Panc1 (cell line): ENCODE measurements at regions of chr9 and their contacts with region 1.

Region 1: GRCh38 chr9:105510024-105510423 is 47.9 kb upstream of the FKTN start:
- DNase-seq: no peak
- ATAC-seq: no peak
- H3K4me3 ChIP-seq: no peak overlapping the region
- H3K27ac ChIP-seq: no peak overlapping the region
- H3K4me1 ChIP-seq: no peaks in the 10 kb centered on the region
- H3K27me3 ChIP-seq: no peaks in the 10 kb centered on the region
- CTCF ChIP-seq: no peak

Region 2: GRCh38 chr9:105457560-105458294 is 52.3 kb before region 1 on chr9:
- CTCF ChIA-PET with region 1: no interaction called
- POLR2A ChIA-PET with region 1: no interaction called
- in situ Hi-C with region 1: no loop called
- intact Hi-C with region 1: no loop called
- DNase-seq: no peak
- ATAC-seq: no peak
- H3K4me3 ChIP-seq: no peak overlapping the region
- H3K27ac ChIP-seq: no peak overlapping the region
- H3K4me1 ChIP-seq: no peaks in the 10 kb centered on the region
- H3K27me3 ChIP-seq: no peaks in the 10 kb centered on the region
- CTCF ChIP-seq: no peak

Region 3: DNA sequence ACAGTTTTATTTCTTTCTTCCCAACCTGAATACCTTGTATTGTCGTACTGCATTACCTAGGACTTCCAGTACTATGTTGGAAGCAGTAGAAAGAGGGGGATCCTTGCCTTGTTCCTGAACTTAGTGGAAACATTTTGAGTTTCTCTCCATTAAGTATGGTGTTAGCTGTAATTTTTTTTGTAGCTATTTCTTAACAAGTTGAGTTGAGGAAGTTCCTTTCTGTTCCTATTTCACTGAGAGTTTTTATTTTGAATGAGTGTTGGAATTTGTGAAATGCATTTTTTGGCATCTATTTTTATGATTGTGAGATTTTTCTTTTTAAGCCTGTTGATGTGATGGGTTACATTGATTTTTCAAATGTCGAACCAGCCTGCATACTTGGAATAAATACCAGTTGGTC is 13.2 kb before region 1 on chr9:
- CTCF ChIA-PET with region 1: no interaction called
- POLR2A ChIA-PET with region 1: interaction called, 16 read pairs
- in situ Hi-C with region 1: no loop called
- intact Hi-C with region 1: no loop called
- DNase-seq: no peak
- ATAC-seq: no peak
- H3K4me3 ChIP-seq: no peak overlapping the region
- H3K27ac ChIP-seq: no peak overlapping the region
- H3K4me1 ChIP-seq: no peaks in the 10 kb centered on the region
- H3K27me3 ChIP-seq: no peaks in the 10 kb centered on the region
- CTCF ChIP-seq: no peak